Activated CD4-positive, alpha-beta memory T cell treated with anti-CD3 and anti-CD28 coated beads for 36 hours (primary cell): ENCODE measurements at regions of chr1 and their contacts with region 1.

Region 1: DNA sequence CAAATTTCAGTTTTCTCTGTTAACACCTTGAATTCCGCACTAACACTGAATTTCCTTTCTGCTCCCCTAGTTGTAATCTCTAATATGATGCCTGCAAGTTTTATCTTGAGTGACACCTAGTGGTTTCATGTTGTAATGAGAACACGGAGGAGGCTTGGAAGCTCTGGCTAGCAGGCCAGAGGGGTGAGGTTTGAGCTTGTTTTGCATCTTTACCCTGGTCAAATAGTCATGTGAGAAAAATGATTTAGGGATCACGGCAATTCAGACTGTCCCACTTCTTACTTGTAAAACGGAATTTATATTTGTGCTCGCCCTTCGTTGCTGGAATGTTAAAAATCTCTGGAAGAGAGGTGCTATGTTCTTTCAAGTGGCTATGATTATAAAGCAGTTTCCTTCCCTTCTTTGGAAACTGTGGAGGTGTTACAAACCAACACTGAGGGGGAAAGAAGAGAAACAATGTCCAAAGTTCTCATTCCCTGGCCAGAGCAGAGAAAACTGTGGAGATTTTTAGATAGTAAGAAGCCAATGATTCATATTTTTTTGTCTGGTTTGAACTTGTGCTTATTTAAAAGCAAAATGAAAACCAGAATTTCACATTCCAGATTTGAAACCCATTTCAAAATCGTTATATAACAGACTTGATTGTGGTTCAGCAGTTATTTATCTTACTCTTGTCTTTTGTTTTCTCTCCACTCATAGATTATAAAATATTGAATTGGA is 5.3 kb upstream of the MROH9 start:
- DNase-seq: peak; percentile 9
- H3K4me3 Mint-ChIP-seq: no peak overlapping the region
- H3K27ac Mint-ChIP-seq: no peak overlapping the region
- H3K4me1 Mint-ChIP-seq: peaks cover 2% of the 10 kb centered on the region
- H3K27me3 Mint-ChIP-seq: peaks cover 3% of the 10 kb centered on the region

Region 2: DNA sequence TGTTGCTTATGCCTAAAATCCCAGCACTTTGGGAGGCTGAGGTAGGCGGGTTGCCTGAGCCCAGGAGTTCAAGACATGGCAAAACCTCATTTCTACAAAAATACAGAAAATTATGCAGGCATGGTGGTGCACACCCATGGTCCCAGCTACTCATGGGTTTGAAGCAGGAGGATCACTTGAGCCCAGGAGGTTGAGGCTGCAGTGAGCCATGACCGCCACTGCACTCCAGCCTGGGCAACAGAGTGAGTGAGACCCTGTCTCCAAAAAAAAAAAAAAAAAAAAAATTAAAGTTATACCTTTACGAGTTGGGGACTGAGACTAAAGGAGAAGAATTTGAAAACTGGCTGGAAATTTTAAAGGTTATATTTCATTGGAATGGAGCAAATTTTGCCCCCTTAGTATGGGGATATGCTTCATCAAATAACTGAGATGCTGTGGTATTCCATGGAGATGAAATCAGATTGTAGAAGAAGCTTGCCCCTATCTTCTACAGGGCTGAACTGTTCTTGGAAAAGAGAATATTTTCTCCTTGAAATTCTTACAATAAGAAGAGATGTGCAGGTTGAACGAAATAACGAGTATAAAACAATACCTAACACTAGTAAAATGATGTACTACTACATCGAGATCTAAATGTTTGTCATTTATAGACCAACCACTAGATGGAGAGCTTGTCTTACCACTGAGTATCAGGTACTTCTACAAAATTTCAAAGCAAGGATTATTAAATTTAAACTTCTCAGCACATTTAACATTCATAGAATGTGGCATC is 1001.4 kb before region 1 on chr1:
- CTCF ChIA-PET with region 1: interaction called, 7 read pairs
- POLR2A ChIA-PET with region 1: no interaction called
- intact Hi-C with region 1: loop called (anchors 1 kb)
- DNase-seq: no peak
- H3K4me3 Mint-ChIP-seq: no peak overlapping the region
- H3K27ac Mint-ChIP-seq: no peak overlapping the region
- H3K4me1 Mint-ChIP-seq: peaks cover 7% of the 10 kb centered on the region
- H3K27me3 Mint-ChIP-seq: no peaks in the 10 kb centered on the region

Region 3: DNA sequence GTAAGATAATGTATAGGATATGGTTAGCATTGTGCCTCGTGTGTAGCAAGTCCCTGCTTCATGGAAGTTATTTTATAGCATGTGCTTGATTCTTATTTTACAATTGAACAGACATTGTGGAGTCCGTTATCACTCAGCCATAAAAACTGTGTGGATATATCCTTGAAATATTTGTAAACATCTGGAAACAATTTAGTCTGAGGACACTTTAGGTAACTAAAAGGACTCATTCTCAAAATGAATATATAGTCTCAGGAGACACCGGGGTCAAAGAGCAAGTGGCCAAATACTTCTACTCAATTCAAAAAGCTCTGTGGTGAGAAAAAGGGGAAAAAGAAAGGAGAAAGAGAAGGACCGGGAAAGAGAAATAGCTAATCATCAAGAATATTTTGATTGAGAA is 242.4 kb before region 1 on chr1:
- CTCF ChIA-PET with region 1: interaction called, 38 read pairs
- POLR2A ChIA-PET with region 1: no interaction called
- intact Hi-C with region 1: loop called (anchors 2 kb)
- DNase-seq: no peak
- H3K4me3 Mint-ChIP-seq: no peak overlapping the region
- H3K27ac Mint-ChIP-seq: no peak overlapping the region
- H3K4me1 Mint-ChIP-seq: no peaks in the 10 kb centered on the region
- H3K27me3 Mint-ChIP-seq: peaks cover 16% of the 10 kb centered on the region

Region 4: GRCh38 chr1:170993151-170993550 is 63.2 kb after region 1 on chr1:
- CTCF ChIA-PET with region 1: no interaction called
- POLR2A ChIA-PET with region 1: no interaction called
- intact Hi-C with region 1: no loop called
- DNase-seq: no peak
- H3K4me3 Mint-ChIP-seq: no peak overlapping the region
- H3K27ac Mint-ChIP-seq: no peak overlapping the region
- H3K4me1 Mint-ChIP-seq: peaks cover under 1% of the 10 kb centered on the region
- H3K27me3 Mint-ChIP-seq: no peaks in the 10 kb centered on the region